ENCODE measurements at regions of chr10 and their contacts with region 1.

Region 1: DNA sequence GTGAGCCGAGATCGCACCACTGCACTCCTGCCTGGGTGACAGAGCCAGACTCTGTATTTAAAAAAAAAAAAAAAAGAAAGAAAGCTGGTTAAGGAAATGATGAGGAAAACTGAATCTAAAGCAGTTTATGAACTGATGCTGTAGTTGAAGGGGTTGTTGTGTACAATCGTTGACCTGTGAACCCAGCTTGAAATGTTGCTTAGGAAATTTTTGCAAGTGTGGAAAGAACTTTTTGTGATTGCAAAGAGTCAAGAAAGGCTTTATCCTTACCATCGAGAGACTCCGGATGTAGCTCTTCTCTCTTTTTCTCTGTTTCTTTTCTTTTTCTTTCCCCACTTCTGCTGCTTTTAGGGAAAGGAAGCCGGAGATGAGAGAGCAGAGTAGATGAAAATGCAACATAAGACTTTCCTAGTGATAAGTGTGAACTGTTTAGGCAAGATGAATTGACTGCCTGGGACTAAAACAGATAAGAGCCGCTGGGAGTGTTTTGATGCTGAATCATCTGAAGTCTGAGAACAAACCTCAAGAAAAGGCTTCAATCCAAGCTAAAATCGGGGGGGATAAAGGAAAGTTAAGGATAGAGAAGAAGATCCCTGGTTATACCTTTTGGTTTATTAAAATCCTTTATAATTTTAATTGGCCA is 69.0 kb downstream of the TAF3 start:
- DNase-seq: peak in 1 of 7 donors; percentile 39
- H3K4me3 ChIP-seq: no peak overlapping the region
- H3K27ac ChIP-seq: no peak overlapping the region
- H3K4me1 ChIP-seq: peaks cover 3 to 12% of the 10 kb centered on the region in 2 donors
- H3K27me3 ChIP-seq: no peaks in the 10 kb centered on the region
- CTCF ChIP-seq: no peak
- POLR2A ChIP-seq: no peak

Region 2: DNA sequence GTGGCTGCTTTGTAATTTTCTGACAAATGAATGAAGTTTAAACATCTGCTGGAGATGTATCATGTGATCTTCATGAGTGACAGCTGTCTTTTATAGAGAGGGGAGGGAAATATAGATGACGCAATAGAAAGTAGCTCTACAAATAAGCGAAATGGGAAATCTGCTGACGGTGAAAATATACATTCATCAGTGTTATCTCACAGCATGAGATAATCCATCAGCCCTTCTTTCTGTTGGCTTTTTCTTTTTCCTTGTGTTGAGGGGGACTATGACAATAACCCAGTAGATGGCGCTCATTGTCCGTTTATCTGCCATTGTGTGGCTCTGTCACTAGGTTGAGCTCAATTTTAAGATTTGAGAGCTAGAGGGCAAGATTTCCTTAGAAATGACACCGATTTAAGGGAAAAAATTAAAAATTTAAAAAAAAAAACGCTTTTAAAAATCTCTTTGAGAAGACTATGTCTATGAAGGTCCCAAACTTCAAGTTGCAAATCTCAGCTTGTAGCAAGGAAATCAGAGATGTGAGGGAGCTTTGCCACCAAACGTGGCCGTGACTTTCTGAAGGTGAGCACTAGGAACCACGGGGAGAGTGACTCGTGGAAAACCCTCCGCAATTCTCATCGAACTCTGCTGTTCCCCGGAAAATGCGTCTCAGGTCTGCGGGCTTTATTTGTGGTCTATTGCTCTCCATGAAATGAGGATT is 361.8 kb before region 1 on chr10:
- intact Hi-C with region 1: no loop called
- DNase-seq: peak; percentile 59 to 84 (median 75)
- H3K4me3 ChIP-seq: no peak overlapping the region
- H3K27ac ChIP-seq: no peak overlapping the region
- H3K4me1 ChIP-seq: no peaks in the 10 kb centered on the region
- H3K27me3 ChIP-seq: peaks cover 19% of the 10 kb centered on the region
- CTCF ChIP-seq: peak; percentile 65 to 94 (median 86)
- POLR2A ChIP-seq: no peak

Region 3: GRCh38 chr10:7593063-7593462 is 294.2 kb before region 1 on chr10:
- intact Hi-C with region 1: no loop called
- DNase-seq: peak in 4 of 7 donors; percentile 19 to 56 (median 44)
- H3K4me3 ChIP-seq: no peak overlapping the region
- H3K27ac ChIP-seq: no peak overlapping the region
- H3K4me1 ChIP-seq: no peaks in the 10 kb centered on the region
- H3K27me3 ChIP-seq: no peaks in the 10 kb centered on the region
- CTCF ChIP-seq: no peak
- POLR2A ChIP-seq: no peak

Region 4: DNA sequence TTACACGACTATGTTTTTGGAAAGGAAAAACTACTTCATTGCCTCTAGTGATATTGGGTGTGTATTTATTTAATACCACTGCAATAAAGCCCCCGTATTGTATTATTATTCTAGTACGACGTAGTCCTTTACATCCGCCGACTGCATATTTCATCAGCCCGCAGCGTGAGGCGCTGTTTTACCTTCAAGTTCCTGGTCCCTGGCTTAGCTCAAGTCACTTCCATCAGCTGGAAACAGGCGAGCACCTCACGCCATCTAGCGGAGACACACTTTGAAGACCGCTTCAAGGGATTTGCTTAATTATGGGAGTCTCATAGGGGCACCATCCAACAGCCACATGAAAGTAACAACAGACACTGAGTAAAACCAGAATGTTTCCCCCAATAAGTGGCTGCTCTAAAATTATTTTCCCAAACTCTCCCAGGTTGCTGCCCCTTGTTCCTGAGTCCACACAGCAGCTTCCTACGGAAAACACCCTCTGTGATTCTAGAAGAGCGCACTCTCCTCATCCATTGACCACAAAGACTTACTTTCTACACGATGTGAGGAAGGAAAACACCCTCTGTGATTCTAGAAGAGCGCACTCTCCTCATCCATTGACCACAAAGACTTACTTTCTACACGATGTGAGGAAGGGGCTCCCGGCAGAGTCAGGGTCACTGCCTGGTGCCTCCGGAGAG is 199.9 kb before region 1 on chr10:
- intact Hi-C with region 1: no loop called
- DNase-seq: peak; percentile 79 to 95 (median 88)
- H3K4me3 ChIP-seq: no peak overlapping the region
- H3K27ac ChIP-seq: no peak overlapping the region
- H3K4me1 ChIP-seq: no peaks in the 10 kb centered on the region
- H3K27me3 ChIP-seq: no peaks in the 10 kb centered on the region
- CTCF ChIP-seq: peak; percentile 77 to 95 (median 92)
- POLR2A ChIP-seq: no peak

Region 5: GRCh38 chr10:8053446-8054290 is 166.4 kb after region 1 on chr10:
- intact Hi-C with region 1: loop called in 1 of 2 experiments (anchors 10 kb)
- DNase-seq: peak; percentile 88 to 96 (median 93)
- H3K4me3 ChIP-seq: peak overlapping the region in 2 of 4 donors; percentile 56 to 76
- H3K27ac ChIP-seq: peak overlapping the region in 2 of 5 donors; percentile 79 to 81
- H3K4me1 ChIP-seq: peaks cover 29 to 42% of the 10 kb centered on the region in 2 donors
- H3K27me3 ChIP-seq: peaks cover 45% of the 10 kb centered on the region
- CTCF ChIP-seq: peak in 4 of 6 experiments; percentile 78 to 94 (median 93)
- POLR2A ChIP-seq: peak in 1 of 2 donors; percentile 1